Naive thymus-derived CD4-positive, alpha-beta T cell (primary cell): ENCODE measurements at regions of chr2 and their contacts with region 1.

Region 1: DNA sequence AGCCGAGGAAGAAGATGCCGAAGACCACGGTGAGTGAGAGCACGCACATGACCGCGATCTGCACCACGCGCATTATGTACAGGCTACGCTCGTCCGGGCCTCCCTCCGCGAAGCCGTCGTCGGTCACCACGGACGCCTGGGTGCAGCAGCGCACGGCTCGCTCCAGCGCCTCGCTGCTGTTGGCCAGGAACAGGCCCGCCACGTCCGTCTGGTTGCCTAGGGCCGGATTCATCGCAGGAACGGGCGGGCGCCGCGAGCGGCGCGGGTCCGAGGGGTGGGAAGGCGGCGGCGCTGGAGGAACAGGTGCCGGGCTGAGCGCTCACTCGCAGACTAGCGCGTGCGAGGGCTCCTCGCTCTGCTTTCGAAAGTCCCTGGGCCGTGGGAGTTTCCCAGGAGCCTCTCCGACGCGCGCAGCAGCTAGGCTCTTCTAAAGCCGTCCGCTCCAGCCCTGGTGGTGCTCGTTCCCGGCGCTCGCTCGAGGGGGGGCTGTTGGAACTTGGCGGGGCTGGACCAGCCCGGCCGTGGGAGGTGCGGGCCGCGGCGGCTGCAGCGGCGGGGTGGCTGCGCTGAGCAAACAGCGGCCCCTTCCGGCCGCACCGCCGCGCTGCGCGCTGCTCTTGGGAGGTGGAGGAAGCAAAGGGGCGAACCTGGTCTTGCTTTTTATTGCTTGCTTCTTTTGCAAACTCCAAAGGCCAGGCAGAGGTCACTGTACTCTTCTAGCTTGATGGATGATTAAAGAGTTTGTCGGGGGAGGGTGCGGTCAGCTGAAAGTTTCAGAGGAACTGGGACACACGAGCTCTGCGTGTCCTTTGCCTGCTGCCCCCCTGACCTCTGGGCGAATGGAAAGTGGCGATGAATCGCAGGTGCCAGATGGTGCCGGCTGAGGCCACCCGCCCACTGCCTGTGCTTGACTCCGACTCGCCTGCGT is at the start of gene RPRM:
- DNase-seq: peak; percentile 25 to 66 (median 47)
- ATAC-seq: peak; percentile 88
- H3K4me3 ChIP-seq: peak within 1 kb of the TSS; percentile 38
- H3K4me3 Mint-ChIP-seq: peak within 1 kb of the TSS; percentile 62 to 87 (median 81)
- H3K27ac ChIP-seq: no peak within 1 kb of the TSS
- H3K27ac Mint-ChIP-seq: no peak within 1 kb of the TSS
- H3K4me1 ChIP-seq: peaks cover 0 to 9% of the 10 kb centered on the region in 2 donors
- H3K4me1 Mint-ChIP-seq: peaks cover 9 to 26% (median 18%) of the 10 kb centered on the region in 7 donors
- H3K27me3 ChIP-seq: peaks cover 0 to 24% of the 10 kb centered on the region in 2 donors
- H3K27me3 Mint-ChIP-seq: peaks cover 63 to 83% (median 72%) of the 10 kb centered on the region in 5 donors
- total RNA-seq, gene RPRM: 0.15 to 0.76 (median 0.24) TPM in 3 of 5 experiments, not detected in the others

Region 2: GRCh38 chr2:152740743-152741328 is 737.8 kb before region 1 on chr2:
- CTCF ChIA-PET with region 1: no interaction called
- POLR2A ChIA-PET with region 1: no interaction called
- intact Hi-C with region 1: loop called (anchors 1 to 2 kb)
- DNase-seq: peak in 7 of 9 donors; percentile 13 to 53 (median 51)
- ATAC-seq: peak; percentile 93
- H3K4me3 ChIP-seq: no peak overlapping the region
- H3K4me3 Mint-ChIP-seq: no peak overlapping the region
- H3K27ac ChIP-seq: no peak overlapping the region
- H3K27ac Mint-ChIP-seq: no peak overlapping the region
- H3K4me1 ChIP-seq: no peaks in the 10 kb centered on the region
- H3K4me1 Mint-ChIP-seq: peaks cover 0 to 9% (median 3%) of the 10 kb centered on the region in 7 donors
- H3K27me3 ChIP-seq: no peaks in the 10 kb centered on the region
- H3K27me3 Mint-ChIP-seq: no peaks in the 10 kb centered on the region

Region 3: DNA sequence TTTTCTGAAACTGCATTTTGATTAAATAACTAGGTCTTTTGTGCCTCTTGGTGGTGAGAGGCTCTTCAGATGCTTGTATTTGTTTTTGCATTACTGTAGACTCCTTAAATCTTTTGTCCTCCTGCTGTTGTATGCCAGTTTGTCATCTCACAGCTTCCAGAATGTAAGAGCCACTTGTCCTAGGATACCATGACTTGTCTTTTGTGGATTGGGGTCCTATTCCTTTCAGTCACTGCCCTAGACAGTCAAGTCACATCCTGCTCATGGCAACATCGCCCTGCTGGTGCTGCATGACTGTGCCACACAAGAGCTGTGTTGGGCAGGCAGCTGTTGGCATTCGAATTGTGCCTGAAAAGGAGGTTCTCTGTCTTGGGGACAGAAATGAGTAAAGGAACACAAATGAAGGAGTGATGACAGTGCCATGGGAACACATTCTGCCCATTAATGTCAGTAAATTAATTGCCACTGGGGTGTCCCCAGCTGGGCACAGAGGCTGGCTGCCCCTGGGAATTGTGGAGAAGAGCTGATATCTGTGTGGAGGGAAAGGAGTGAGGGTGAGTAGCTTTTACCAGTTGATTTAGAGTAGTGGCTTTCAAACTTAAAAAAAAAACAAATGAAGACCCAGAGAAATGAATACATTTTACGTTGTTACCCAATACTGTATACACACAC is 619.9 kb before region 1 on chr2:
- CTCF ChIA-PET with region 1: interaction called, 3 read pairs
- POLR2A ChIA-PET with region 1: no interaction called
- intact Hi-C with region 1: loop called in 1 of 2 experiments (anchors 10 kb)
- DNase-seq: no peak
- ATAC-seq: no peak
- H3K4me3 ChIP-seq: no peak overlapping the region
- H3K4me3 Mint-ChIP-seq: no peak overlapping the region
- H3K27ac ChIP-seq: no peak overlapping the region
- H3K27ac Mint-ChIP-seq: no peak overlapping the region
- H3K4me1 ChIP-seq: no peaks in the 10 kb centered on the region
- H3K4me1 Mint-ChIP-seq: no peaks in the 10 kb centered on the region
- H3K27me3 ChIP-seq: no peaks in the 10 kb centered on the region
- H3K27me3 Mint-ChIP-seq: peaks cover 0 to 35% (median 4%) of the 10 kb centered on the region in 5 donors

Region 4: DNA sequence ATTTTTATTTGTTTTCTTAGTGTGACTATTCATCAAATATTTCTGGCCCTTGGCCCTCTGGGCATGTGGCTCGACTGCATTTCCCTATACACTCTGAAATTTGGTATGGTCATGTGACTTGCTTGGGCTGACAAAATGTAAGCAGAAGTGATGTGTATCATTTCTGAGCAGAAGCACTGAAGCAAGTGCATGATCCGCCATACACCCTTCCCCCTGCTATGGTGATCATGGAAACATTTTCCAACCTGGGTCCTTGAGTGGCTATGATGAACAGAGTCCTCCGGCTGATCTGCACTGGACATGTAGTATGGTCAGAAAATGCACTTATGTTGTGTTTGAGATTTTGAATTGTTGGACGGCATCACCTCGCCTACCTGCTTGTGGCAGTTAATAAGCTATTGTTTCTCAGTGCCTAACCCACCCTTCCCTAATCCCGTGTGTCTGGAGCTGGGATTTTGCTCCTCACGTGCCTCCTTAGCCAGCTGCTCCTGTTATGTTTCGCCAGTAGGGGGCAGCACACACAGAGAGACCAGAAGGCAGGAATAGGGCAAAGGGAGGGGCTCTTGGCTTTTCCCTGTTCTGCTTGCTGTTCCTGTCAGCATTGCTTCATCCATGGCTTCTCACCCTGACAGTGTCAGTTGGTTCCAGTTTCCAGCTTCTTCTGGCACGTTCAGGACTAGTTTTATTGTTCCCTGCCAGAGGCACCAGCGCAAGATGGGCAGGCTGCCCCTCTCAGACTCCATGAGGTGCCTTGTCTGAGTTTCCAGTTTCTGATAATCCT is 552.9 kb before region 1 on chr2:
- CTCF ChIA-PET with region 1: no interaction called
- POLR2A ChIA-PET with region 1: no interaction called
- intact Hi-C with region 1: loop called in 1 of 2 experiments (anchors 5 kb)
- DNase-seq: peak in 1 of 9 donors; percentile 40
- ATAC-seq: no peak
- H3K4me3 ChIP-seq: no peak overlapping the region
- H3K4me3 Mint-ChIP-seq: no peak overlapping the region
- H3K27ac ChIP-seq: no peak overlapping the region
- H3K27ac Mint-ChIP-seq: no peak overlapping the region
- H3K4me1 ChIP-seq: no peaks in the 10 kb centered on the region
- H3K4me1 Mint-ChIP-seq: no peaks in the 10 kb centered on the region
- H3K27me3 ChIP-seq: no peaks in the 10 kb centered on the region
- H3K27me3 Mint-ChIP-seq: peaks cover 0 to 11% (median 0%) of the 10 kb centered on the region in 5 donors

Region 5: GRCh38 chr2:153163058-153163457 is 315.5 kb before region 1 on chr2:
- CTCF ChIA-PET with region 1: no interaction called
- POLR2A ChIA-PET with region 1: no interaction called
- intact Hi-C with region 1: loop called in 1 of 2 experiments (anchors 2 kb)
- DNase-seq: no peak
- ATAC-seq: no peak
- H3K4me3 ChIP-seq: no peak overlapping the region
- H3K4me3 Mint-ChIP-seq: no peak overlapping the region
- H3K27ac ChIP-seq: no peak overlapping the region
- H3K27ac Mint-ChIP-seq: no peak overlapping the region
- H3K4me1 ChIP-seq: no peaks in the 10 kb centered on the region
- H3K4me1 Mint-ChIP-seq: no peaks in the 10 kb centered on the region
- H3K27me3 ChIP-seq: no peaks in the 10 kb centered on the region
- H3K27me3 Mint-ChIP-seq: peaks cover 0 to 5% (median 0%) of the 10 kb centered on the region in 5 donors